ENCODE measurements at regions of chr7 and their contacts with region 1.

Region 1: DNA sequence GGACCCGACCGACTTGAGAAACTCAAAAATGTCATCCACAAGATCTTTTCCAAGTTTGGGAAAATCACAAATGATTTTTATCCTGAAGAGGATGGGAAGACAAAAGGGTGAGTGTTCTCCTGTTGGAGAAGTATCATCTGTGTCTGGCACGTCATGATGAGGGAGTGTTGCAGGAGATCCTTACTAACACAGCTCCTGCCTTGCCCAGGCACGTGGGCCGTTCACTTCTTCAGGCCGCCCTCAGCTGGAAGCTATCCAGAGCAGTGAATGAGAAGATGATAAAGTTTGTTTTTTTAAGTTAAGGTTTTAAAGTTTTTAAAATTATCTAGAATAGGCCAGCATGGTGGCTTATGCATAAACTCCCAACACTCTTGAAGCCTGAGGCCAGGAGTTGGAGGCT is 6.2 kb downstream of the EIF3B start:
- DNase-seq: no peak
- ATAC-seq: no peak
- H3K4me3 ChIP-seq: no peak overlapping the region
- H3K27ac ChIP-seq: no peak overlapping the region
- H3K4me1 ChIP-seq: peaks cover 21% of the 10 kb centered on the region
- CTCF ChIP-seq: no peak
- EP300 ChIP-seq: no peak
- POLR2A ChIP-seq: no peak
- RAD21 ChIP-seq: no peak

Region 2: GRCh38 chr7:2175514-2175913 is 185.3 kb before region 1 on chr7:
- CTCF ChIA-PET with region 1: no interaction called
- POLR2A ChIA-PET with region 1: no interaction called
- DNase-seq: peak in 1 of 2 experiments; percentile 33
- ATAC-seq: peak in 1 of 2 experiments; percentile 67; a peak in 3 of 6 replicates
- H3K4me3 ChIP-seq: no peak overlapping the region
- H3K27ac ChIP-seq: no peak overlapping the region
- H3K4me1 ChIP-seq: peaks cover 23% of the 10 kb centered on the region
- CTCF ChIP-seq: no peak
- EP300 ChIP-seq: no peak
- POLR2A ChIP-seq: no peak
- RAD21 ChIP-seq: no peak

Region 3: DNA sequence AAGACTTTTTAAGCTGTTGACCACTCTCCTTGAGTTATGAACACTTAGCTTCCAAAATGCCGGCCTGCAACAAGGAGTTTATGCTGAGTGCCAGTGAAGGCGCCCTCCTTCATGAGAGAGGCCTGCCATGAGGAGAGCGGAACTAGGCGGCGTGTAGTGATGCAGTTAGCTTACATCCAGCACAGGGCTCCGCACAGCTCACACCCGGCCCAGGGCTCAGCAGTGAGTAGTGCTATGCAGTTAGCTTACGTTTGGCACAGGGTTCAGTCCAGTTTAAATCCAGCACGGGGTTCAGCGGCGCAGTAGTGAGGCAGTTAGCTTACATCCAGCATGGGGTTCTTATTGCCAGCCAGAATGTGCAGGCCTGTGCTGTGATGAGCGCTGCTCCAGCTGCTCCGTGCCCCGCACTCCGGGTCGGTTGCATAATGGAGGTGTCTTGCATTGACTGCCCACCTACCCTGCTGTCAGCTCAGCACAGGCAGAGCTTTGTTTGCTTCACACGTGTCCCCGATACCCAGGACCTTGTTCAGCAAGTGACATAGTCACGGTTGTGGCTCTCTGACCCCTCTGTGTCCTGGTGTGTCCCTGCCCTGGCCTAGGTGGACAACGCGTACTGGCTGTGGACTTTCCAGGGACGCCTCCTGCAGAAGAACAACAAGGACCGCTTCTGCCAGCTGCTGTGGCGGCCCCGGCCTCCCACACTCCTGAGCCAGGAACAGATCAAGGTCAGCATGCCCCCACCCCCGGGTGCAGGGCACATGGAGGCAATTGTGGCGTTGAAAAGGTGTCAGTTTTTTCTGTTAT is 15.8 kb after region 1 on chr7:
- CTCF ChIA-PET with region 1: interaction called, 10 read pairs
- POLR2A ChIA-PET with region 1: no interaction called
- DNase-seq: no peak
- ATAC-seq: peak in 1 of 2 experiments; percentile 8; a peak in 1 of 6 replicates
- H3K4me3 ChIP-seq: no peak overlapping the region
- H3K27ac ChIP-seq: no peak overlapping the region
- H3K4me1 ChIP-seq: no peaks in the 10 kb centered on the region
- CTCF ChIP-seq: no peak
- EP300 ChIP-seq: no peak
- POLR2A ChIP-seq: no peak
- RAD21 ChIP-seq: no peak

Measured in A549 (cell line).